ENCODE measurements at regions of chr17 and their contacts with region 1.

Region 1: DNA sequence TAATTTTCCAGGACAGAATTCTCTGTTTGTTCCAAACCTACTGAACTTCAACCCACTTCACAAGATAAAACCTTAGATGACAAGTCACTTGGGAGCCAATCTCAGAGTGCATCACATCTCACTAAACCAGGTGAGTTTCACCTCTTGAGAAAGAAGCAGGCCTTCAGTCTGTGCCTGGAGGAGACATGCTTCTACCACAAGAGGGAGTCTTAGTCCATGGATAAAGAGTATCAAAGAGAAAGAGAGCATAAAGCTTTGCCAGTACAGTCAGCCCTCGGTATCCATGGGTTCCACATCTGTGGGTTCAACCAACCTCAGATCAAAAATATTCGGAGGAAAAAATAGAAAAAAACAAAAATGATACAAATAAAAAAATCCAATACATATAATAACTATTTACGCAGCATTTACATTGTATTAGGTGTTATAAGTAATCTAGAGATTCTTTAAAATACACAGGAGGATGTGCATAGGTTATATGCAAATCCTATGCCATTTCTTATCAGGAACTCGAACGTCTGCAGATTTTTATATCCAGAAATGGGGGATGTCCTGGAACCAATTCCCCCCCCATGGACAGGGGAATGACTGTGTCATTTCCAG is 37.7 kb downstream of the DUSP14 start:
- DNase-seq: peak; percentile 66
- H3K4me3 ChIP-seq: no peak overlapping the region
- H3K27ac ChIP-seq: no peak overlapping the region
- H3K4me1 ChIP-seq: no peaks in the 10 kb centered on the region
- H3K27me3 ChIP-seq: no peaks in the 10 kb centered on the region
- CTCF ChIP-seq: peak; percentile 82 to 84

Region 2: DNA sequence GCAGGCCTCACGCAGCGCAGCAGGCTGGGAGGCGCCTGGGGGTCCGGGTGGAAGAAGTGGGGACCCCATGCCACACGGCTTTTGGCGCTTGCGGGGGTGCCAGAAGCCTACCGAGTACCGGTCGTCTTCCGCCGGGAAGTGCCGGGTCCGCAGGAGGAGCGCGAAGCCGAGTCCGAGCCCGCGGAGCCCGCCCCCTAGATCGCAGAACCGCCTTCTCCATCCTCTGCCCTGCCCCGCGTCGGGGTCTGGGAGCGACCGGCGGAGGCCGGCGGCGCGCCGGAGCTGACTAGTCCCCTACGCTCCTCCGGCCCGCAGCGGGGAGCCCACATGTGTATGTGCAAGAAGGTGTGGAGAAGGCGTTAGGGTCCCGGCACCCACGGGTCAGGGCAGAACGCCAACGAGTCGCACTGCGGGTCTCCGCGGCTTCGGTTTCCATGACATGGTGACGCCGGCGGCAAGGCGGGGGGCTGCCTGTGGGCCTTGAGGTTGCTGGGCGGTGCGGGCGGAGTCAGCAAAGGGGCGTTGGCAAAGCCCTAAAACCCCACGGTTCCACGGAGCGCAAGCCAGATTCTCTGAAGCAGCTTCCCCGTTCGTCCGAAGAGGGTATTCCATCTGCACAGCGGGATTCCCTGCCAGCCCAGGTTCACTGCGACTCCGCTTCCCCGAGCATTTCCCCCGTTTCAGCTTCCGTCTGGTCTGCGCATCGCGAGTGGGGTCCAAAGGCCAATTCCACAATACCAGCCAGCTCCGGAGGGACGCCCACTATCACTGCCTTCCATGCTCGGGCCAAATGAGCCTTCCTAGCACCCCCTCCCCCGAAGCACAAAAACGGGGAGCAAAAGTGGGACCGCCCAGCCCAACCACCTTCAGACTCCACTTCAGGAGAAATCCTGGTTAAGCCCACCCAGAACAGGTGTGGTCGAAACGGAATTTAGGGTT is 592.4 kb before region 1 on chr17:
- CTCF ChIA-PET with region 1: no interaction called
- dilution Hi-C with region 1: no loop called
- in situ Hi-C with region 1: no loop called
- intact Hi-C with region 1: no loop called
- DNase-seq: no peak
- H3K4me3 ChIP-seq: no peak overlapping the region
- H3K27ac ChIP-seq: no peak overlapping the region
- H3K4me1 ChIP-seq: peaks cover 46% of the 10 kb centered on the region
- H3K27me3 ChIP-seq: peaks cover 98% of the 10 kb centered on the region
- CTCF ChIP-seq: no peak

Region 3: GRCh38 chr17:37327341-37328090 is 199.8 kb before region 1 on chr17:
- CTCF ChIA-PET with region 1: no interaction called
- dilution Hi-C with region 1: no loop called
- in situ Hi-C with region 1: no loop called
- intact Hi-C with region 1: no loop called
- DNase-seq: peak; percentile 9
- H3K4me3 ChIP-seq: no peak overlapping the region
- H3K27ac ChIP-seq: no peak overlapping the region
- H3K4me1 ChIP-seq: no peaks in the 10 kb centered on the region
- H3K27me3 ChIP-seq: no peaks in the 10 kb centered on the region
- CTCF ChIP-seq: no peak

Region 4: GRCh38 chr17:37489197-37490001 is 38.0 kb before region 1 on chr17 and contains the start of gene DUSP14:
- CTCF ChIA-PET with region 1: no interaction called
- dilution Hi-C with region 1: no loop called
- in situ Hi-C with region 1: no loop called
- intact Hi-C with region 1: no loop called
- DNase-seq: peak; percentile 70
- H3K4me3 ChIP-seq: peak within 1 kb of the TSS; percentile 82 to 86 (median 82)
- H3K27ac ChIP-seq: peak within 1 kb of the TSS; percentile 95
- H3K4me1 ChIP-seq: peaks cover 24% of the 10 kb centered on the region
- H3K27me3 ChIP-seq: no peaks in the 10 kb centered on the region
- CTCF ChIP-seq: peak in 1 of 2 donors; percentile 5
- total RNA-seq, gene DUSP14: 121 to 148 TPM

Region 5: GRCh38 chr17:37551788-37552187 is 24.4 kb after region 1 on chr17:
- CTCF ChIA-PET with region 1: interaction called, 4 read pairs
- dilution Hi-C with region 1: no loop called
- in situ Hi-C with region 1: no loop called
- intact Hi-C with region 1: loop called (anchors 2 kb)
- DNase-seq: peak; percentile 79
- H3K4me3 ChIP-seq: peak overlapping the region in 2 of 3 experiments; percentile 10 to 22
- H3K27ac ChIP-seq: peak overlapping the region; percentile 39
- H3K4me1 ChIP-seq: peaks cover 18% of the 10 kb centered on the region
- H3K27me3 ChIP-seq: no peaks in the 10 kb centered on the region
- CTCF ChIP-seq: no peak

Region 6: DNA sequence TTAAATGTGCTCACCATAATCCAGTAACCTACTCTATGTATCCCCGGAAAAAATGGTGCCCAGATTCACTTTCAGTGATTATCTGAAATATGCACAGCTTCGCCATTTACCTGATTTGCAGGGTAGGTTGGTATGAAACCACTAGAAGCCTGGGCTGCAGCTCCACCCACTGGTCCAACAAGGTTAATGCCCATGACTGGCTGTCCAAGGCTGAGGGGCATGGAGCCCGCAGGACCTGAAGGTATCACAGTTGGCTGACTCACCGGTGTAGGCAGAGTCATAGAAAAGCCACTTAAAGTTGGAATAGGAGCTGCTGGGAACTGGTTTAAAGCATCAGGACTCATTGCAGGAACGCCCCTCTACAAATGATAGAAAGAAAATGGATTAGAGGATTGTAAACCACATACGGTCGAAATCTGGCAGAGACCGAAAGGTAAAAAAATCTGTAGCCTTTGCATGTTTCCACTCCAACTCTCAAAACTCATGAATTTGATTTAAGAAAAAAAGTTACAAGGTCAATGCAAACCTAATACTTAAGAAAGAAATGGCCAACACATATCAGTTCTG is 43.3 kb after region 1 on chr17:
- CTCF ChIA-PET with region 1: interaction called, 6 read pairs
- dilution Hi-C with region 1: no loop called
- in situ Hi-C with region 1: no loop called
- intact Hi-C with region 1: loop called (anchors 1 kb)
- DNase-seq: peak; percentile 89
- H3K4me3 ChIP-seq: no peak overlapping the region
- H3K27ac ChIP-seq: no peak overlapping the region
- H3K4me1 ChIP-seq: peaks cover 2% of the 10 kb centered on the region
- H3K27me3 ChIP-seq: no peaks in the 10 kb centered on the region
- CTCF ChIP-seq: peak; percentile 80 to 81

Region 7: GRCh38 chr17:37609170-37610040 is 82.1 kb after region 1 on chr17 and contains the start of gene SYNRG:
- CTCF ChIA-PET with region 1: no interaction called
- dilution Hi-C with region 1: loop called (anchors 5 kb)
- in situ Hi-C with region 1: no loop called
- intact Hi-C with region 1: loop called (anchors 1 kb)
- DNase-seq: peak; percentile 95
- H3K4me3 ChIP-seq: peak within 1 kb of the TSS; percentile 82 to 99 (median 89)
- H3K27ac ChIP-seq: peak within 1 kb of the TSS; percentile 53
- H3K4me1 ChIP-seq: peaks cover 14% of the 10 kb centered on the region
- H3K27me3 ChIP-seq: no peaks in the 10 kb centered on the region
- CTCF ChIP-seq: peak in 1 of 2 donors; percentile 34
- total RNA-seq, gene SYNRG: 22.6 to 23.0 TPM

Measured in mammary epithelial cell (primary cell).